ENCODE measurements at regions of chr20 and their contacts with region 1.

Region 1: GRCh38 chr20:32521780-32522525 is 63.2 kb downstream of the NOL4L start:
- DNase-seq: no peak

Region 2: GRCh38 chr20:32252189-32252588 is 269.8 kb before region 1 on chr20:
- intact Hi-C with region 1: no loop called
- DNase-seq: no peak

Region 3: DNA sequence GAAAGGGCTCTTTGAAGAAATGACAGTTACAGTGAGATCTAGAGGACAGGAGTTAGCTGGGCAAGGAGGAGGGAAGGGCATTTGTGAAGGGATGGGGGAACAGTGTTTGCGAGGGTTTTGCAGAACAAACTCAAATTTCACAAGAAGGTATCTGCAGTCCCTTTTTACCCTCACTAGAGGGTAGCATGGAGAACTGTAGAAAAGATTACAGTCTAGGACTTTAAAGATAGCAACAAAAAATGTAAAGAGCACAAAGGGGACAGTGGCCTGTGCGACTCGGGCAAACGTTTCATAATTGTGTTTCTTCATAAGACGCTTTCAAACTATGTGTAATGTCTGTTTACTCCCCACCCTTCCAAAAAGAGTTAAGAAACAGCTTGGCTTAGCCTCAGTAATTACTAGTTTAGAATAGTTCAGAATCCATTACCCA is 185.0 kb before region 1 on chr20:
- intact Hi-C with region 1: no loop called
- DNase-seq: no peak

Region 4: DNA sequence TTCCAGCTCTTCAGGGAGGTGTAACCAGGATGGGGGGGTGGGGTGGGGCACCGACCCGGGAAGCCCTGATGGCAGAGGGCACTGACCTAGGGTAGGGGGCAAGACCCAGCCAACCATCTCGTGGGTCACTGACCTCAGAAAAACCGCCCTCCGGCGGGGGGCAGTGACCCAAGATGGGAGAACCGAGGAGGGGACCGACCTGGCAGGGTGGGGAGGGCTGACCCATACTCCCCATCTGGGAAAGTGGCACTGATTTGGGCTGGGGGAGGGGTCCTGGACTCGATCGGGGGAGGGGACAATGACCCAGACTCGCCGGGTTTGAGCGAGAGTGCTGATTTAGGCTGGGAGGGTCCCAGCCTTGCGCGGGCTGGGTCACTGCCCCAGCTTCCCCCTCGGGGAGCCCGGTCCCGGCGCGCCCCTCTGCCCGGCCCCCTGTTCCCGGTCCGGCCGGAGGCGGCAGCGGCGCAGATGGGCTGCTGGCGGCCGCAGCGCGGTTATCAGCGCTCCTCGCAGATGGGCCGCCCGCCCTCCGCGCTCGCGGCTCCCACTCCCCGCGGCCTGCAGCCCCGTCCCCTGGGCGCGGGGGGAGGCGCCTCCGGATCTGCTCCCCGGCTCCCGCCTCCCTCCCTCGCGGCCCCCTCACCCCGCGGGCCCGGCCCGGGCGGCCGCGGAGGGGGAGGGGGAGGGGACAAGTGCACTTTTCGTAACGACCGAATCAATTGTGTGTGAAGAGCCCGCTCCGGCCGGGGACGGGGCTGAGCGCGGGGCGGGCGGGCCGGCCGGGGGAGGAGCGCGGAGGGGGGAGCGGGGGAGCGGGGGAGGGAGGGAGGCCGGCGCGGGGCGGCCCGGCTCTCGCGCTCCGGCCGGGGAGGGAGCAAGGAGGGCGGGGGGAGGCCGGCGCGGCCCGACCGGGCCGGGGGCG is 61.0 kb after region 1 on chr20:
- intact Hi-C with region 1: loop called (anchors 5 kb)
- DNase-seq: no peak

Region 5: DNA sequence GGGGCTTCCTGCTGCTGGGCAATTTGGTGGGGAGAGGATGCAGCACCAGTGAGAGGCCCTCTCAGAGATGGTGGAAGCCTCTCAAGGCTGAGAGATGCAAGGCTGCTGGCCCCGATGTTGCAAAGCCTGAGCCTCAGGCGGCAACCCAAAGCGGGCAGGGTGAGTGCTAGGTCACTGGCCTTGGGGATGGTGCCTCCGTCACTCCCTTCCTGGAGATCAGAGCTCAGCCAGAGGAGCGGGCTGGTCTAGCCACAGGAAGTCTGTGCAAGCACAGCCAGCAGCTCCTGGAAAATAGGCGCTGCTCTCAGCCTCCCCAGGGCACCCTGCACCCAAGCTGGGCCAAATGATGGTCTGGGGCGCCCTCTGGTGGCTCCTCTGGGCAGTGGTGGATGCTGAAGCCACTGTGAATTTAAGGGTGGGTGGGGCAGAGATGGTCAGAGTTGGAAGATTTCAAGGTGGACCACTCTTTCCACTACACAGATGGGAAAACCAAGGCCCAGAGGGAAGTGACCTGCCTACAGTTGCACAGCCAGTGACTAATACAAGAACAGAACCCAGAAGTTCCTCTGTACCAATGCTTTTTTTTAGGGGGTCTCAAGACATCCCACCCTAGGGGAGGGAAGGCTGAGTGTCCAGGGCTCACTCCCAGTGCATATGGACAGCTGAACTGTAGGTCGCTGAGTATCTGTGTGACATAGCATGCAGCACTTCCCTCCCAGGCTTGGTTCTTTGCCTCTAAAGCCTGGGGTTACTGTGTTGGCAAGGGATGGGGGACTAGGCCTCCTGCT is 131.0 kb after region 1 on chr20:
- intact Hi-C with region 1: loop called (anchors 1 kb)
- DNase-seq: peak; percentile 91

Region 6: GRCh38 chr20:32779500-32780211 is 257.7 kb after region 1 on chr20:
- intact Hi-C with region 1: loop called (anchors 10 kb)
- DNase-seq: no peak